ENCODE measurements at regions of chr15 and their contacts with region 1.

Region 1: DNA sequence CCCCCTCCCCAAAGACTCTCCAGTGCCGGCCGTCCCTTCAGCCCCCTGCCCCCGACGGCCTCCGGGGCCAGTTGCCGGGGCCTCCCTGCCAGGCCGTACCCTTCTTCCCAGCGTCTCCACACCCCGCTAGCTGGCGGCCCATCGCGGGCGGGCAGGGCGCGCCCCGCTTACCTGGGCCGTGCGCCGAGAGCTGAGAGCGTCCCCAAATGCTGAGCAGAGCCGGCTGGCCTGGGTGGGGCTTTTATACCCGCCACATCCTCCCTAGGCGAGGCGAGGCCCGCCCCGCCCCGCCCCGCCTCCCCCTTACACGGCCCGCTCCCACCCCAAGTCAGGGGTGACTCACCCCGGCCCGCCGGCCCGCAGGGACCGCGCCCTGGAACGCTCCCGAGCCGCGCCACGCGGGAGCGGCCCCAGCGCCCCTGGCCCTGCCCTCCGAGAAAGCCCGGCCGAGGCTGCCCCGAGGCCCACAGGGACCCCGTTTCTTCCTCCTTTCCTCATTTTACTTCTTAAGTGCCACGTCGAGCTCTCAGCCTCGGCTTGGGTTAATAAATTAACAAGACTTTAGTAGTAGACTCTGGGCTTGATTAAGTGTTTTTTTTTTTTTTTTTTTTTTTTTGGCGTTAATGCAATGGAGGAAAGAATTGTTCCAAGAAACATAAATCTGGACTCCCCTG is at the start of gene ANXA2:
- DNase-seq: no peak
- H3K4me3 ChIP-seq: peak within 1 kb of the TSS; percentile 73
- CTCF ChIP-seq: no peak

Region 2: GRCh38 chr15:60362321-60363086 is 35.4 kb before region 1 on chr15:
- CTCF ChIA-PET with region 1: interaction called, 3 read pairs
- POLR2A ChIA-PET with region 1: interaction called, 18 read pairs
- DNase-seq: no peak
- H3K4me3 ChIP-seq: no peak overlapping the region
- CTCF ChIP-seq: no peak

Region 3: GRCh38 chr15:60374628-60375081 is 23.3 kb before region 1 on chr15:
- CTCF ChIA-PET with region 1: interaction called, 3 read pairs
- POLR2A ChIA-PET with region 1: interaction called, 36 read pairs
- DNase-seq: peak; percentile 85
- H3K4me3 ChIP-seq: no peak overlapping the region
- CTCF ChIP-seq: no peak

Region 4: DNA sequence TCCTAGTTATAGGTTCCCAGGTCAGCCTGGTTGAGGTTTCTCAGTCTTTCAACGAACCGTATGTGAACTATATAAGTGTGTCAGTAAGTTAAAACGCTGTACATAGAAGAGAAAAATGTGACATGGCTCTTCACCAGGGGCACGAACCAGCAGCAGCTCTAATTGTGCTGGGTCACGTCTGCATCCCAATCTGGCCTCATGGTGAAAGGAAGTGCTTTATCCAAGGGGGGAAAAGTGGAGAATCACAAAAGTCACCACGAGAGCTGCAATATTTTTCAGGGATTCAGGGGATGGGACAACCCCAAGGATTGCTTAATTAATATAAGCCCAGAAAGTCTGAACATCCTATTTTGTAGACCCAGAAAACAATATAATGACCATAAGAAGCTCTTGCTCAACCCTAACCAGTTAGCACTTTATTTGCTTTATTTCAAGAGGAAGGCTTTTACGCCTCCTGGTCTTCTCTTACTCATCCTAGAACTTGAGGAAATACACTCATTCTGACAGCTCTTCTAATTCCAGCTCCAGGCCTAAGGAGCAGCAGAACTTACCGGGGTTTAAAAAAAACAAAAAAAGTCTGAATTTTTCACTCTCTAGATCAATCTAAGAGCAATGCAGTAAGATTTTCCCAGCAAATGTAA is 16.6 kb before region 1 on chr15:
- CTCF ChIA-PET with region 1: interaction called, 4 read pairs
- POLR2A ChIA-PET with region 1: interaction called, 36 read pairs
- DNase-seq: no peak
- H3K4me3 ChIP-seq: no peak overlapping the region
- CTCF ChIP-seq: no peak

Region 5: GRCh38 chr15:60421544-60421943 is 23.6 kb after region 1 on chr15:
- CTCF ChIA-PET with region 1: interaction called, 6 read pairs
- POLR2A ChIA-PET with region 1: interaction called, 18 read pairs
- DNase-seq: no peak
- H3K4me3 ChIP-seq: no peak overlapping the region
- CTCF ChIP-seq: no peak

Region 6: DNA sequence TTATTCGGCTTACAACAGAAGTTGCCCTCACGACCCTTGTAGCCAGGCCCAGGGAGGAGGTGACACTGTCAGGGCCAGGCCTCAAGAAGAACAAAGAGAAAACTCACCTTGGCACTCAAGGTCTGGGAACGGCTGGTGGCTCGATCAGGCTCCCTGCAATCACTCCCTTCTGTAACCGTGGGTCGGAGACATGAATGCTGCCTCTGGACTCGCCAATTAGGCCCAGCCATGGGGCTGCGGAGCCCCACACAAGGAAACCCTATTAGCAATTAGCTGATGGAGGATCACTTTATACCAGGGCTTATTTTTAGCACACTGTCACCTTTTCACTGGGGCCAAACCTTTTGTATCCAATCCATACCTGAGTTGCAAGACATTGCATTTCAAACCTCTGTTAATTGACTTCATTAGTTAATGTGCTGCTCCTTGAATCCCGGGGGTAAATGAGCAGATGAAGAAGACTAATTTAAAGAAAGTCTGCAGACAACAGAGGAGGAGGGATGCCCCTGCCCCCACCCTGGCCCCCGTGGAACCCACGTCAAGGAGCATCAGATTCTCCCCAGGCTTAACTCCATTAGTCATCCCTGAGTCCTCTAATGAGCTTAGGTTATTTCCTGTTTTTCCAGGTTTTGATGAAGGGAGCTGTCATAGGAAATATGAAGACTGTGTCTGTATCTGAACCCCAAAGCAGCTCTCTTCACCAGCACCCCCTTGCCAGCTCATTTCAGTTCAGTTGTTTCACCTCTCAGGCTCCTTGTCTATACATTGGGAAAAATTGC is 575.9 kb after region 1 on chr15:
- CTCF ChIA-PET with region 1: no interaction called
- POLR2A ChIA-PET with region 1: no interaction called
- DNase-seq: peak; percentile 65
- H3K4me3 ChIP-seq: no peak overlapping the region
- CTCF ChIP-seq: no peak